ENCODE measurements at regions of chr14 and their contacts with region 1.

Region 1: DNA sequence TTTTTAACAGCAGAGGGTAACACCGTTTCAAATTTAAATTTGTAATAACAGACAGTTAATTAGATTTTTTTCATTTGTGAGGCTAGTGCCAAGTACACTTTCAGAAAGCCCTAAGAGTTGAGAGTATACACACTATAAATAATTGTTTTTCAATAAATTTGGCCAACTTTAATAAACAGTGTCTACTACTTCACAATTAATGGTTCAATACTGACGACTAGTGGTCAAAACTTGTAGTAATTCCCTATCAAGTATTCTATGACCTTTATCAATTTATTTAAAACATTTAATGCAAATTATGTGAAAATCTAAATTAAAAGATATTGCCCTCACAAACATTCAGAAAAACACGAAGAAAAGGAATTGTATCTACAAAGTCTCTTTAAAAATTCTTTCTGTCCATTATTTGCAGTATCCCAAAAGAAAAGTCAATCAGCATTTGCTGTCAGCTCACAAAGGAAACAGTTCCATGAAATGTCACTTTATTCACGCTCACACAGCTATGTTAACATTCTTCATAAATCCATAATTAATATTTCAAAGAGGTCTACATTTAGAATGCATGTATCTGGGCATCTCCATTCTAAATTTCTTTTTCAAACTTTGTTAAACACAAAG is 91.2 kb downstream of the CEP128 start:
- DNase-seq: peak; percentile 49
- H3K4me3 Mint-ChIP-seq: no peak overlapping the region
- H3K27ac Mint-ChIP-seq: no peak overlapping the region
- H3K4me1 Mint-ChIP-seq: no peaks in the 10 kb centered on the region
- H3K27me3 Mint-ChIP-seq: no peaks in the 10 kb centered on the region
- CTCF ChIP-seq: peak; percentile 70

Region 2: GRCh38 chr14:78967110-78967809 is 1883.0 kb before region 1 on chr14:
- CTCF ChIA-PET with region 1: interaction called, 3 read pairs
- POLR2A ChIA-PET with region 1: no interaction called
- intact Hi-C with region 1: loop called (anchors 2 kb)
- DNase-seq: no peak
- H3K4me3 Mint-ChIP-seq: no peak overlapping the region
- H3K27ac Mint-ChIP-seq: no peak overlapping the region
- H3K4me1 Mint-ChIP-seq: no peaks in the 10 kb centered on the region
- H3K27me3 Mint-ChIP-seq: peaks cover 48% of the 10 kb centered on the region
- CTCF ChIP-seq: no peak

Region 3: DNA sequence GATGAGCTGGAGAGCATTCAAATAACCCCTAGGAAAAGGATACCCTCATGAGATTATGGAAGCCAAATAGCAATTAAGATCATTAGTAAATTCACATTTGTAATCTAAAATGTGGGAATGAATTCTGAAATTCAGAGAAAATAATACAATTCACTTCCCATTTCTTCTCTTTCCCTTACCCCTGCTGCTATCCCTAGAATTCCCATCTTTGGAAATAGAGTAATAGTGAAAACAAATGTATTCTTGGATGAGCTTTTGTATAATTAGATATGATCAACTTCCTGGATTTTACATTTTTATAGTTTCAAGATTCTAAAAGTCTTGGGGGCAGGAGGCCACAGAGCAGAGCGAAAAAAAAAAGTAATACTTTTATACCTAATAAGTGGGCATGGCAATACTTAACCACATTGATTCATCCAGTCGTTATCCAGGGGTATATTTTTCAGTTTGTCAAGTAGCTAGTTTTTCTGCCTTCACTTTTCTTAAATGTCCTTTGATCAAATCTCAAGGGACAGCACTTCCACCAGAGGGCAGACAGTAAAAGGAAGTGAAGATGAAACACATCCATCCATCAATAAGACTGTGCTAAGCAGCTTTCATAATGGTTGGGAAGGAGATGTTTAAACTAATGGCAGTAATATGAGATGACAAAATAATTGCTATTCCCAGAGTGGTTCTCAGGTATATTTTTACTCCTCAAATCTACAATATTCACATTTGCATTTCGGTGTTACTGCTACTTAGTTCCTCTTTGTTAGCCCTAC is 1040.3 kb before region 1 on chr14:
- CTCF ChIA-PET with region 1: no interaction called
- POLR2A ChIA-PET with region 1: no interaction called
- intact Hi-C with region 1: loop called (anchors 5 kb)
- DNase-seq: peak; percentile 34
- H3K4me3 Mint-ChIP-seq: no peak overlapping the region
- H3K27ac Mint-ChIP-seq: no peak overlapping the region
- H3K4me1 Mint-ChIP-seq: no peaks in the 10 kb centered on the region
- H3K27me3 Mint-ChIP-seq: peaks cover 29% of the 10 kb centered on the region
- CTCF ChIP-seq: peak; percentile 28

Region 4: DNA sequence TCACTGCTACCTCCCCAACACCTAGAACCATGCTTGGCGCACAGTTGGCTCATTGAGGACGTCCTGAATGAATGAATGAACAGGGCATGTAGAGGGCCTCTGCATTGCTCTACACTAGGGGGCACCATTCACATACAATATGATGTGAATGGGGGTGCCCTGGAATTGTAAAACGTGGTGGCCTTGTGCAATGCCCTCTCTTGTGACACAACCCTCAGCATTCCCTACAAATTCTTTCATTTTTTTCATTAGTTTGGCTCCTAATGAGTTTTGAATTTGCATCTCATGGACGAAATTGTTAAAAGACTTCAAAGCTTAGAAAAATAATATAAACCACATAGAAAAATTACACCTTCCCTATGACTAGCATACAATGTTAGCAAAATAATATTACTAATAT is 636.7 kb before region 1 on chr14:
- CTCF ChIA-PET with region 1: interaction called, 8 read pairs
- POLR2A ChIA-PET with region 1: no interaction called
- intact Hi-C with region 1: loop called (anchors 1 kb)
- DNase-seq: peak; percentile 83
- H3K4me3 Mint-ChIP-seq: no peak overlapping the region
- H3K27ac Mint-ChIP-seq: no peak overlapping the region
- H3K4me1 Mint-ChIP-seq: peaks cover 11% of the 10 kb centered on the region
- H3K27me3 Mint-ChIP-seq: no peaks in the 10 kb centered on the region
- CTCF ChIP-seq: peak; percentile 79

Region 5: DNA sequence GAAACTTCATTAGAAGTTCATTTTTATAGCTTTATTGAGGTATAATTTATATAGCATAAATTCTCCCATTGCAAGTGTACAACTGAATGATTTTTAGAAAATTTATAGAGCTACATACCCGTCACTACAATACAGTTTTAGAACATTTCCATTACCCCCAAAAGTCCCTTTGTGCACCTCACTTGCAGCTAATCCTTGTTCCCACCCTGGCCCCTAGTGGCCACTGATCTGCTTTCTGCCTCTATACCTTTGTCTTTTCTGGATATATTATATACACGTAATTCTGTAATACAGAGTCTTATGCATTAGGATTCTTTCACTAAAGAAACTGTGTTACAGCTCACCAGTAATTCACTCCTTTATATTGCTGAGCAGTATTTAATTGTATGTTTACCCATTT is 493.9 kb before region 1 on chr14:
- CTCF ChIA-PET with region 1: no interaction called
- POLR2A ChIA-PET with region 1: no interaction called
- intact Hi-C with region 1: loop called (anchors 10 kb)
- DNase-seq: peak; percentile 10
- H3K4me3 Mint-ChIP-seq: no peak overlapping the region
- H3K27ac Mint-ChIP-seq: no peak overlapping the region
- H3K4me1 Mint-ChIP-seq: no peaks in the 10 kb centered on the region
- H3K27me3 Mint-ChIP-seq: no peaks in the 10 kb centered on the region
- CTCF ChIP-seq: peak; percentile 25

Region 6: GRCh38 chr14:80587075-80587724 is 263.1 kb before region 1 on chr14:
- CTCF ChIA-PET with region 1: interaction called, 14 read pairs
- POLR2A ChIA-PET with region 1: no interaction called
- intact Hi-C with region 1: loop called (anchors 5 kb)
- DNase-seq: peak; percentile 46
- H3K4me3 Mint-ChIP-seq: no peak overlapping the region
- H3K27ac Mint-ChIP-seq: peak overlapping the region; percentile 74
- H3K4me1 Mint-ChIP-seq: peaks cover 46% of the 10 kb centered on the region
- H3K27me3 Mint-ChIP-seq: no peaks in the 10 kb centered on the region
- CTCF ChIP-seq: peak; percentile 46

Region 7: GRCh38 chr14:80681651-80682050 is 168.7 kb before region 1 on chr14:
- CTCF ChIA-PET with region 1: no interaction called
- POLR2A ChIA-PET with region 1: no interaction called
- intact Hi-C with region 1: no loop called
- DNase-seq: no peak
- H3K4me3 Mint-ChIP-seq: no peak overlapping the region
- H3K27ac Mint-ChIP-seq: no peak overlapping the region
- H3K4me1 Mint-ChIP-seq: no peaks in the 10 kb centered on the region
- H3K27me3 Mint-ChIP-seq: no peaks in the 10 kb centered on the region
- CTCF ChIP-seq: no peak

Region 8: DNA sequence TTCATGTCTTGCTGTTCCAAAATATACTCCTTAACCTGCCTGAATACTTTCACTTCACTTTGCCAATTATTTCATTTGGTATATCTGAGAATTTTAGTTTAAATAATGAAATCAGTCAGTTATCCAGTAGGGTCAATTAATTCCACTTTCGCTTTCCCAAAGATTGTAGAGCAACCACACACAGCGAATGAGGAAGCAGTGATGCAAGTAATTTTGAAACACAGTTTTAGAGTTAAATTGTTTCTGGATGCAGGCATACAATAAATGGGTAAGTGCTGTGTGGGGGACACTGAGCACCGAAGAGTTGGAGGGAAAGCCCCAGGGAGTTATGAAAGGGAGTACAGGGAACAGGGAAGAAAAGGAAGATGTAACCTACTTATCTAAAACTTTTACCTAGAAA is 167.9 kb after region 1 on chr14:
- CTCF ChIA-PET with region 1: no interaction called
- POLR2A ChIA-PET with region 1: no interaction called
- intact Hi-C with region 1: no loop called
- DNase-seq: no peak
- H3K4me3 Mint-ChIP-seq: no peak overlapping the region
- H3K27ac Mint-ChIP-seq: no peak overlapping the region
- H3K4me1 Mint-ChIP-seq: no peaks in the 10 kb centered on the region
- H3K27me3 Mint-ChIP-seq: peaks cover 36% of the 10 kb centered on the region
- CTCF ChIP-seq: no peak